ENCODE measurements at regions of chr6 and their contacts with region 1.

Region 1: DNA sequence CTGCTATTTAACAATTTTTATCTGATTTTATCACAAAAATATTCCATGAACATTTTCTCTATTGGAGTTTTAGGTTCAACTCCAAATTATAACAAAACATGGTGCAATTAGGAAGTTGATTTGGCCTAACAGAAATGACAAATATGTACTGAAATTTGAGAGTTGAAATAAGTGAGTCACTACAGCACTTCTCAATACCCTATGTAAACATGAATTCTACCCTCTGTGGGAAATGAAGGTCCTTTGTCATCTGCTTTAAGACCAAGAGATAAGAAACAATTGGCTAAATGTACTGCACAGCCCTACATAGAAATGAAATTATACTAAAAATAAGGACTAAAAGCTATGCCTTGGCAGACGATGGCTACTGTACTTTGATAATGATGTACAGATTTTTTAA is 86.2 kb upstream of the BEND6 start:
- DNase-seq: no peak
- H3K4me3 ChIP-seq: no peak overlapping the region
- H3K4me3 Mint-ChIP-seq: no peak overlapping the region
- H3K27ac ChIP-seq: no peak overlapping the region
- H3K27ac Mint-ChIP-seq: no peak overlapping the region
- H3K4me1 ChIP-seq: no peaks in the 10 kb centered on the region
- H3K4me1 Mint-ChIP-seq: no peaks in the 10 kb centered on the region
- H3K27me3 ChIP-seq: no peaks in the 10 kb centered on the region
- H3K27me3 Mint-ChIP-seq: peaks cover 0 to 22% of the 10 kb centered on the region in 2 donors

Region 2: DNA sequence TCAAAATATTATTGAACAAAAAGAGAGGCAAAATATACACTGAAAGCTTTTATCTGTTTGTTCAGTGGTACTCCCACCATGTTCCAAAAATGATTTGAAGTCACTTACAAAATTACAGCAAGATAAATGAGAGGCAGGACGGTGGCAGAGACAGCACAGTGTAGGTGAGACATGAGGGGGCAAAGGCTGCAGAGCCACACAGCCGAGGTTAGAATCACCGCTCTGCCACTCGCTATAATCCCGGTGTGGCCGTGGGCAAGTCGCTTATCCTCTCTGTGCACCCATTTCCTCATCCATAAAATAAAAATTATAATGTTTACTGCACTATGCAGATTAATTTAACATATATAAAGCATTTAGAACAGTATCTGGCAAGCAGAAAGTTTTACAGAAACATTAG is 53.9 kb before region 1 on chr6:
- CTCF ChIA-PET with region 1: no interaction called
- POLR2A ChIA-PET with region 1: interaction called, 10 read pairs
- DNase-seq: no peak
- H3K4me3 ChIP-seq: no peak overlapping the region
- H3K4me3 Mint-ChIP-seq: no peak overlapping the region
- H3K27ac ChIP-seq: no peak overlapping the region
- H3K27ac Mint-ChIP-seq: no peak overlapping the region
- H3K4me1 ChIP-seq: no peaks in the 10 kb centered on the region
- H3K4me1 Mint-ChIP-seq: no peaks in the 10 kb centered on the region
- H3K27me3 ChIP-seq: no peaks in the 10 kb centered on the region
- H3K27me3 Mint-ChIP-seq: no peaks in the 10 kb centered on the region

Region 3: DNA sequence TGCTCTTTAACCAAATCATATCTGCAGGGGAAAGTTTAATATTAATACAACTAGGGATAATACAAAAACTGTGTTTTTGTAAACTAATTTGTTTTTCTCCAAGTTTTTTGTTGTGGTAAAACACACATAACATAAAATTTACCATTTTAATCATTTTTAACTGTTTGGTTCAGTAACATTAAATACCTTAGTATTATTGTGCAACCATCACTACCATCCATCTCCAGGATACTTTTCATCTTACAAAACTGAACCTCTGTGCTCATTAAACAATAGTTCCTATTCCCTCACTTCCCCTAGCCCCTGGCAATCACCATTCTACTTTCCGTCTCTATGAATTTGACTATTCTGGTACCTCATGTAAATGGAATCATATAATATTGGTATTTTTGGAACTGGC is 102.2 kb after region 1 on chr6:
- CTCF ChIA-PET with region 1: no interaction called
- POLR2A ChIA-PET with region 1: no interaction called
- DNase-seq: no peak
- H3K4me3 ChIP-seq: no peak overlapping the region
- H3K4me3 Mint-ChIP-seq: no peak overlapping the region
- H3K27ac ChIP-seq: no peak overlapping the region
- H3K27ac Mint-ChIP-seq: no peak overlapping the region
- H3K4me1 ChIP-seq: no peaks in the 10 kb centered on the region
- H3K4me1 Mint-ChIP-seq: no peaks in the 10 kb centered on the region
- H3K27me3 ChIP-seq: no peaks in the 10 kb centered on the region
- H3K27me3 Mint-ChIP-seq: peaks cover 6 to 22% of the 10 kb centered on the region in 2 donors

Measured in CD8-positive, alpha-beta memory T cell (primary cell).